ENCODE measurements at regions of chr7 and their contacts with region 1.

Region 1: DNA sequence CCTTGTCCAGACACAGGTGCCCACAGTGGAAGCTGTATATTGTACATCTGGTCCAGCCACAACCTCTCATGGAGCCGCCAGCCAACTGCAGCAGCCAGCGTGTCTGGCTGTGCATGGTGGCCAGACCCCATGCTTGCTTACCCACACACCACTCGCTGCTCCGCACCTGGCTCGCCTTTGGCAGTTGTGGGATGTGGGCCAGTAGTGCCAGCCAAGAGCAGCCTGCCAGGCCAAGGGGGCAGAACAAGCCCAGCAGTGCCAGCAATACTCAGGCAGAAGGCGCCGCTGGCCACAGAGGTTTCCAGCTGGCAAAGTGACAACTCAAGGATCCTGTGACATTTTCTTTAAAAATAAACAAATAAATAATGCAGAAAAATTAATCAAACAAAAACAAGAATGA is 11.7 kb upstream of the TMEM243 start:
- DNase-seq: no peak
- H3K4me3 ChIP-seq: no peak overlapping the region
- H3K27ac ChIP-seq: no peak overlapping the region
- H3K4me1 ChIP-seq: no peaks in the 10 kb centered on the region; a peak in 1 of 7 replicates
- H3K27me3 ChIP-seq: no peaks in the 10 kb centered on the region
- CTCF ChIP-seq: no peak
- EP300 ChIP-seq: no peak
- POLR2A ChIP-seq: no peak
- RAD21 ChIP-seq: no peak

Region 2: GRCh38 chr7:87188930-87189329 is 42.3 kb before region 1 on chr7:
- CTCF ChIA-PET with region 1: interaction called, 10 read pairs
- POLR2A ChIA-PET with region 1: no interaction called
- DNase-seq: no peak
- H3K4me3 ChIP-seq: no peak overlapping the region
- H3K27ac ChIP-seq: no peak overlapping the region
- H3K4me1 ChIP-seq: no peaks in the 10 kb centered on the region
- H3K27me3 ChIP-seq: no peaks in the 10 kb centered on the region
- CTCF ChIP-seq: no peak
- EP300 ChIP-seq: no peak
- POLR2A ChIP-seq: no peak
- RAD21 ChIP-seq: no peak

Region 3: DNA sequence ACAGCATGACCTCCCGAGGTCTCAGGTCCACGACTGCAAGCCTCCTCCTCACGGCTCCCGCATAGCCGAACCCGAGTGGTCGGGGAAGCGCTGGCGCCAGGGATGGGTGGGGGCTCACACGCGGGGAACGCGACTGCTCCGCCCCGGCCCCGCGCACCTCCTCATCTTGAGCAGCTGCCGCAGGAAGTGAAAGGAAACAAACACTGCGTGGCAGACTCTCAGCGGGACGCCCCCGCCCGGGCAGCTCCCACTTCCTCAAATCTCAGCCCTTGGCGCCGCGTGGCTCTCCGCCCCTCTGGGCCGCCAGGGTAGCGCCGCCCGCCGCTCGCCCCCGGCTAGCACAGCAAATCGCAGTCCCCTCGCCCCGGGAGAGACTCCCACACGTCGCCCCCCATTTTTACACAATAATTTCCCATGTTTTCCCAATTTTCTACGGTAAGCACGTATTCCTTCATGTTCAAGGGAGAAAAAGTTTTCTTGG is 11.7 kb before region 1 on chr7 and contains the start of gene TMEM243:
- CTCF ChIA-PET with region 1: interaction called, 14 read pairs
- POLR2A ChIA-PET with region 1: interaction called, 10 read pairs
- DNase-seq: peak in 1 of 2 experiments; percentile 73
- H3K4me3 ChIP-seq: peak within 1 kb of the TSS; percentile 80 to 98 (median 92)
- H3K27ac ChIP-seq: peak within 1 kb of the TSS; percentile 60; the same call in 1 of the 2 replicates
- H3K4me1 ChIP-seq: peaks cover 0 to 7% (median under 1%) of the 10 kb centered on the region in 4 experiments; a peak in 4 of 7 replicates
- H3K27me3 ChIP-seq: peaks cover 0 to 18% (median 15%) of the 10 kb centered on the region in 4 experiments; a peak in 5 of 7 replicates
- CTCF ChIP-seq: peak in 1 of 3 experiments; percentile 9; a peak in 1 of 4 replicates
- EP300 ChIP-seq: no peak
- POLR2A ChIP-seq: peak in 1 of 2 experiments; percentile 46; a peak in 1 of 3 replicates
- RAD21 ChIP-seq: no peak
- total RNA-seq, gene TMEM243: 26.0 and 27.6 TPM in 2 replicates

Region 4: DNA sequence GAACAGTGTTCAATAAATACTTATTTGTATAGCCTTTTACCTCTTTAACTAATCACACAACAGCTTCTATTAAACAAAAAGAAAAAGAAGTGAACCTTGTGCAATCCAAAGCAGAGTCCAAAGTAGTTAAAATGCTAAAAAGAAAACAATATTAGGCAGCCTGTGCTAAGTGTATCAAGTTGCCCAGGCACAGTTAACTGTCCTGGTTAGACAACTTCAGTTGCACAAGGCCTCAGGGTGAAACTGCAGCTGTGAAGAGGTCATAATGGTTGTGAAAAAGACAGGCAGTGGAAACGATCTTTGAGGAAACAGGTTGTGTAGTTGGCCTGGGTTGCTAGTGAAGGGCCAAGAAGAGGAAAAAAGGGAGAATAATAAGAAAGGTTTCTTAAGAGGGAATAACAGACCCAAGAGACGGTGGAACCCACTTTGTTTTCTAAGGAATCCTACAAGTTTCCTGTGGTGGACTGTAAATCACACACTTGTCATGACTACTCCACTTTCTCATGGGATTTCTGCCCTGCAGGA is 108.2 kb after region 1 on chr7:
- CTCF ChIA-PET with region 1: no interaction called
- POLR2A ChIA-PET with region 1: no interaction called
- DNase-seq: no peak
- H3K4me3 ChIP-seq: no peak overlapping the region
- H3K27ac ChIP-seq: no peak overlapping the region
- H3K4me1 ChIP-seq: peaks cover 0 to 2% (median 0%) of the 10 kb centered on the region in 4 experiments; a peak in 1 of 7 replicates
- H3K27me3 ChIP-seq: no peaks in the 10 kb centered on the region
- CTCF ChIP-seq: no peak
- EP300 ChIP-seq: no peak
- POLR2A ChIP-seq: no peak
- RAD21 ChIP-seq: no peak

Measured in H1 (cell line).